ENCODE measurements at regions of chr14 and their contacts with region 1.

Region 1: DNA sequence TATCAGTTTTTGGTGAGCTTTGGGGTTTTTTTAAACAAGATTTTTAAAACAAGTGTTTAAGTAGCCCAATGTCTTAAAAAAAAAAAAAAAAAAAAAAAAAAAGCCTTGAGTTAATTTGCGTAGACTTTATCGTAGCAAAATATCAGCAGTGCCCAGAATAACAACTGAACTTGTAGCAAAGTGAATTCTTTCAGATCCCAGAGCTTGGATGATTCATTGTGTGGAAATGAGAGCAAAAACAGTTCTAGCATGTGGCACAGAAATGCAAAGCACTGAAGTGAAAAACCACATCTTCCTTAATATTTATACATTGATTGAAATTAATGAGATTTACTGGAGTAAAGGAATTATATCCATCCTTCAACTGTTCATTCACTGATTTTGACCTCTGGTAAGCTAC is 258.1 kb downstream of the EGLN3 start:
- DNase-seq: no peak
- H3K4me3 ChIP-seq: no peak overlapping the region
- H3K27ac ChIP-seq: no peak overlapping the region
- H3K4me1 ChIP-seq: no peaks in the 10 kb centered on the region
- H3K27me3 ChIP-seq: no peaks in the 10 kb centered on the region
- CTCF ChIP-seq: no peak
- POLR2A ChIP-seq: no peak

Region 2: DNA sequence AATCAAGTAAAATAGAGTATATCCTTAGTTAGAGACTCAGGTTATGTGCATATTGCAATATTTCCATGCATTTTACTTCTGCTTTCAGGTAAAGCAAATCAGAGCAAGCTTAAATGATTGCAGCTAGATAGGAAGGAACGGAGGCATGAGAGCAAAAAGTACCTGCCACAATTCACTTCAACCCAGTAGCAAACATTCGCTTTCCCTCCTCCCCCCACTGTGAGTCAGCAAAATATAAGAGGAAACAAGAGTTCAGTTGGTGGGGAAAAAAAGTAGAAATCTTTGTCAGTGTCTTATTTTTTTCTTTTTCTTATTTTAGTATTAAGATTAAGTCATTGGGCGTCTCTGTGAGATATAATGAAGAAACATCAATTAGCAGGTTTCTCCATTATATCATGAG is 278.7 kb before region 1 on chr14:
- intact Hi-C with region 1: no loop called
- DNase-seq: no peak
- H3K4me3 ChIP-seq: no peak overlapping the region
- H3K27ac ChIP-seq: no peak overlapping the region
- H3K4me1 ChIP-seq: no peaks in the 10 kb centered on the region
- H3K27me3 ChIP-seq: no peaks in the 10 kb centered on the region
- CTCF ChIP-seq: no peak
- POLR2A ChIP-seq: no peak

Region 3: DNA sequence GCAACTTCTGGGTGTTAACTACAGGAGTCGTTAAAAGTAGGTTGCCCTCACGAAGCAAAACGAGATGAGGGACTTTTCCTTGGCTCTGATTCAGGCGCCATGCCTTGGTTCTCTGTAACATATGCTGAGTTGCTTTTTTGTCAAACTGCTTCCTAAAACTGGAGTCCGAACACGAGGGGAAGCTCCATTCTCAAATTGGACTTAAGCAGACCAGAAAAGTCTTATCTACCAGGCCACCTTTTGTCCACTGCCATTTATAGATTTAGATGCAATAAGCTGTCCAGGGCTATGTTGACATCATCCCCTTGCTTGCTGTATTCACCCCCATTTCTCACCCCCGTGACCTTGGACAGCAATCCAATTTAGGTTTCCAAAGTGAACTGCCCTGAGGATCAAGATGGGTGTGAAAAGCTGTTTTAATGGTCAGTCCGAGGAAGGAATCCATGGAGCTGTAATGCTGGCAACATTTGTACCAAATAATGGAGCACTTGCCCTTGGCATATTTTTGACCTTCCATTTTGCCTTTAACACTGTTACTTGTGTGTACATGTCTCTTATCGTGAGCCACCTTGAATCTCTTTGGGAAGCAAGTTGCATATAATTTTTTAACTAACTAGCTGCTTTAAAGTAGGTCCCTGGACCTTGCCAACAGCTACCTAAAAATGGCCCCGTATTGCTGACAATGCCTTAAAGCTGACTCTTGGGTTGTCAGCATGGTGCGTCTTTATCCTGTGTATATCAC is 40.0 kb before region 1 on chr14:
- intact Hi-C with region 1: loop called (anchors 2 kb)
- DNase-seq: no peak
- H3K4me3 ChIP-seq: no peak overlapping the region
- H3K27ac ChIP-seq: no peak overlapping the region
- H3K4me1 ChIP-seq: no peaks in the 10 kb centered on the region
- H3K27me3 ChIP-seq: no peaks in the 10 kb centered on the region
- CTCF ChIP-seq: no peak
- POLR2A ChIP-seq: no peak

Measured in breast epithelium (tissue), 4 donors.